ENCODE measurements at regions of chr11 and their contacts with region 1.

Region 1: DNA sequence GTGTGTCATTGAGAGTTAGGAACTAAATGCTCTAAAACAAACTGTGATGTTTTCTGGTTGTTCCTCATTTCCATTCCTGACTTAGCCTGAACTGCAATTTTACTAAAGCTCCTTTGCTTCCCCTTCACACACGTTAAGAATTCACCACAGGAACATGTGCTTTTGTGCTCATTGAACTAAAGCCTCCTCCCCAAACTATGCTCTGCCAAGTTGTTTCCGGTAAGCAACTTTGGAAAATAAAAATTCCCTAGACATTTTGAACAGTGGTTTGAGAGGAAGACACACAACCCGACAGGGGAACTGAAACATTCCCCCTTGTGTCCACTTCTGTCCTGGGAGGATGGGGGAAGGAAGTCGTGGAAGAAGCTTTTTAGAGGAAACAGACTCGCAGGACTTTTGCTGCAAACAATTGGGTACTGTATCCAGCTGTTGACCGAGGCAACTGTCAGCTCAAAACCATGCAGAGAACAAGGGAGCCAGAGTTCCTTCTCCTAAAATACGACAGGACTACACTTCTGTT is 66.9 kb downstream of the GAB2 start:
- DNase-seq: peak; percentile 57 to 68 (median 65)
- H3K4me3 ChIP-seq: peak overlapping the region; percentile 19 to 70 (median 37)
- H3K4me3 Mint-ChIP-seq: peak overlapping the region; percentile 69 to 86
- H3K27ac ChIP-seq: peak overlapping the region; percentile 67 to 92
- H3K27ac Mint-ChIP-seq: peak overlapping the region; percentile 93 to 98 (median 96)
- H3K4me1 ChIP-seq: peaks cover 80 to 84% of the 10 kb centered on the region in 2 donors
- H3K4me1 Mint-ChIP-seq: peaks cover 92% of the 10 kb centered on the region
- H3K27me3 ChIP-seq: no peaks in the 10 kb centered on the region
- H3K27me3 Mint-ChIP-seq: peaks cover 0 to 1% (median 0%) of the 10 kb centered on the region in 3 donors
- CTCF ChIP-seq: no peak

Region 2: DNA sequence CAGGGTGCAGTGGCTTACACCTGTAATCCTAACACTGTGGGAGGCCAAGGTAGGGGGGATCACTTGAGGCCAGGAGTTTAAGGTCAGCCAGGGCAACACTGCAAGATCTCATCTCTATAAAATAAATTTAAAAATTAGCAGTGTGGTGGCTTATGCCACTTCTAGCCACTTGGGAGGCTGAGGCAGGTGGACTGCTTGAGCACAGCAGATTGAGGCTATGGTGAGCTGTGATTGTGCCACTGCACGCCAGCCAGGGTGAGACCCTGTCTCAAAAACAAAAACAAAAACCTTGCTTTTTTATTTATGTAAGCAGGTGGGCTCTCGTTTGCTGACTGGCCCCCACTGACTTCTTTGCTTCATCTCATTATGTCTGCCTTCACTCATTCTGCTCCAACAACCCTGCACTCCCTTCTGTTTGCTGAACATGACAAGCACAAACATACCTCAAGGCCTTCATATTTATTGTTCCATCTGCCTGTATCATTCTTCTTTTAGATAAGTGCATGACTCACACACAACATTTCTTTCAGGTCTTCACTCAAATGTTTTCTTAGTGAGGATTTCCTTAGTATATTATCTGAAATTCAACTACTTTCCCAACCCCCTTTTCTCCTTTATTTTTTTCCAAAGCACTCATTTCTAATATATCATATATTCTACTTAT is 680.7 kb before region 1 on chr11:
- intact Hi-C with region 1: no loop called
- DNase-seq: no peak
- H3K4me3 ChIP-seq: no peak overlapping the region
- H3K4me3 Mint-ChIP-seq: no peak overlapping the region
- H3K27ac ChIP-seq: no peak overlapping the region
- H3K27ac Mint-ChIP-seq: peak overlapping the region in 2 of 7 donors; percentile 13 to 48
- H3K4me1 ChIP-seq: no peaks in the 10 kb centered on the region
- H3K4me1 Mint-ChIP-seq: no peaks in the 10 kb centered on the region
- H3K27me3 ChIP-seq: no peaks in the 10 kb centered on the region
- H3K27me3 Mint-ChIP-seq: peaks cover 0 to 3% (median 0%) of the 10 kb centered on the region in 3 donors
- CTCF ChIP-seq: no peak

Region 3: GRCh38 chr11:78168539-78169477 is 181.9 kb before region 1 on chr11:
- intact Hi-C with region 1: no loop called
- DNase-seq: no peak
- H3K4me3 ChIP-seq: no peak overlapping the region
- H3K4me3 Mint-ChIP-seq: no peak overlapping the region
- H3K27ac ChIP-seq: no peak overlapping the region
- H3K27ac Mint-ChIP-seq: no peak overlapping the region
- H3K4me1 ChIP-seq: no peaks in the 10 kb centered on the region
- H3K4me1 Mint-ChIP-seq: no peaks in the 10 kb centered on the region
- H3K27me3 ChIP-seq: no peaks in the 10 kb centered on the region
- H3K27me3 Mint-ChIP-seq: peaks cover 0 to 3% (median 0%) of the 10 kb centered on the region in 3 donors
- CTCF ChIP-seq: no peak

Region 4: DNA sequence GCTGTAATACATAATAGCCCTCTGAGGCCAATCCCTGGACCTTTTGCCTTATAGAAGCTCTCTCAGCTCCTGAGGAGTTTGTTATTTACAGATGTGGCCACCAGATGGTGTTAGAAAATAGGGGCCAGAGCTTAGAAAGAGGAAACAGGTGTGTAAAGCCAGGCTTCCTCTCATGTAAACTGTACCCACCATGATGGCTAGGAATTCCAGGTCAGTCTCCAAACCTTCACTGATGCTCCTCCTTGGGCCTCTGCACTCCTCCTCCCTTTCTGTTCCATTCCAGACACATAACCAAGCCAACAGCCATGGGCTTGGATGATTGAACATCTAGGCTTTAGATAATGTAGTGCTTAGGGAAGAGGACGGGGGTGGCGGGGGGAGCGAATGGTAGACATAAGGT is 122.2 kb before region 1 on chr11:
- intact Hi-C with region 1: no loop called
- DNase-seq: peak; percentile 48 to 60 (median 56)
- H3K4me3 ChIP-seq: no peak overlapping the region
- H3K4me3 Mint-ChIP-seq: no peak overlapping the region
- H3K27ac ChIP-seq: peak overlapping the region in 1 of 2 donors; percentile 23
- H3K27ac Mint-ChIP-seq: peak overlapping the region in 2 of 7 donors; percentile 55 to 71
- H3K4me1 ChIP-seq: peaks cover 8 to 9% of the 10 kb centered on the region in 2 donors
- H3K4me1 Mint-ChIP-seq: peaks cover 37% of the 10 kb centered on the region
- H3K27me3 ChIP-seq: no peaks in the 10 kb centered on the region
- H3K27me3 Mint-ChIP-seq: no peaks in the 10 kb centered on the region
- CTCF ChIP-seq: peak; percentile 68

Region 5: GRCh38 chr11:78295991-78296935 is 54.4 kb before region 1 on chr11:
- intact Hi-C with region 1: loop called in 1 of 2 experiments (anchors 5 kb)
- DNase-seq: no peak
- H3K4me3 ChIP-seq: no peak overlapping the region
- H3K4me3 Mint-ChIP-seq: no peak overlapping the region
- H3K27ac ChIP-seq: peak overlapping the region in 1 of 2 donors; percentile 42
- H3K27ac Mint-ChIP-seq: peak overlapping the region in 4 of 7 donors; percentile 58 to 76 (median 67)
- H3K4me1 ChIP-seq: peaks cover 26 to 28% of the 10 kb centered on the region in 2 donors
- H3K4me1 Mint-ChIP-seq: peaks cover 54% of the 10 kb centered on the region
- H3K27me3 ChIP-seq: no peaks in the 10 kb centered on the region
- H3K27me3 Mint-ChIP-seq: no peaks in the 10 kb centered on the region
- CTCF ChIP-seq: no peak

Region 6: DNA sequence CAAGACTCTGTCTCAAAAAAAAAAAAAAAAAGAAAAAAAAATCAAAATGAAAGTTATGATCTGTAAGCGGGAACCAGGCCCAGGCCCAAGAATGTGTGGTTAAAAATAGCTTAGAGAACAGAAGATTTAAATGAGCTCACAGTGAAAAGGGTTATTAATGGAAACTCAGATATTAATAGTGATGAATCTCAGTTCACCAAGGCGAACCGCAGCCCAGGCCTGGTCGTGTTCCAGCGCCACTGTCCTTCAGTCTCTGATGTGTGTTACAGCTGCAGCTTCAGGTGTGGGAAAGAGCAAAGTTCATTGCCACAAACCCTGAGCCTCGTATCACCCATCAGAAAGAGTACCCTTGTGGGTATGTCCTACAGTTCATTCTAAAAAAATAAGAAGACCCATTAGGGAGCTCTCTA is 40.2 kb before region 1 on chr11:
- intact Hi-C with region 1: loop called in 1 of 2 experiments (anchors 5 kb)
- DNase-seq: no peak
- H3K4me3 ChIP-seq: no peak overlapping the region
- H3K4me3 Mint-ChIP-seq: no peak overlapping the region
- H3K27ac ChIP-seq: peak overlapping the region in 1 of 2 donors; percentile 55
- H3K27ac Mint-ChIP-seq: peak overlapping the region; percentile 38 to 73 (median 54)
- H3K4me1 ChIP-seq: peaks cover 30 to 63% of the 10 kb centered on the region in 2 donors
- H3K4me1 Mint-ChIP-seq: peaks cover 72% of the 10 kb centered on the region
- H3K27me3 ChIP-seq: no peaks in the 10 kb centered on the region
- H3K27me3 Mint-ChIP-seq: no peaks in the 10 kb centered on the region
- CTCF ChIP-seq: no peak

Region 7: DNA sequence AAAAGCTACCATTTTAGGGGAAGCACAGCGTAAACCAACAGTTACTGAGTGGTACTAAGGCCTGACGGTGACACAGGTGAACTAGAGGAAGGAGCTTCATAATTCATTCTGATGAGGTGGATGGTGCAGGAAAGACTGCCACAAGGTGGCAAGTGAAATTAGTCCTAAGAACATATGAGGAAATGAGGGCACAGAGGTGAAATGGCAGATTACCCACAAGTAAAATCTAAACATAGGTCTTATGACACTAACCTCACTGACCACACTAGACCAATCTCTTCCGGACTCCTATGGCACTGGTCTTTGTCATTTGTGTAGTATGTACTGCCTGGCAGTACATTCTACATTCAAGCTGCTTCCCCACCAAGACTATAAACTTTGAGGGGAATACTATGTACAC is 46.7 kb after region 1 on chr11:
- intact Hi-C with region 1: loop called in 1 of 2 experiments (anchors 5 kb)
- DNase-seq: peak; percentile 48 to 56 (median 53)
- H3K4me3 ChIP-seq: peak overlapping the region in 1 of 3 experiments; percentile 15
- H3K4me3 Mint-ChIP-seq: peak overlapping the region in 1 of 2 donors; percentile 23
- H3K27ac ChIP-seq: peak overlapping the region in 1 of 2 donors; percentile 45
- H3K27ac Mint-ChIP-seq: peak overlapping the region in 6 of 7 donors; percentile 51 to 79 (median 72)
- H3K4me1 ChIP-seq: peaks cover 19 to 29% of the 10 kb centered on the region in 2 donors
- H3K4me1 Mint-ChIP-seq: peaks cover 60% of the 10 kb centered on the region
- H3K27me3 ChIP-seq: no peaks in the 10 kb centered on the region
- H3K27me3 Mint-ChIP-seq: no peaks in the 10 kb centered on the region
- CTCF ChIP-seq: no peak

Region 8: GRCh38 chr11:78698612-78699011 is 347.9 kb after region 1 on chr11:
- intact Hi-C with region 1: no loop called
- DNase-seq: no peak
- H3K4me3 ChIP-seq: no peak overlapping the region
- H3K4me3 Mint-ChIP-seq: no peak overlapping the region
- H3K27ac ChIP-seq: no peak overlapping the region
- H3K27ac Mint-ChIP-seq: no peak overlapping the region
- H3K4me1 ChIP-seq: no peaks in the 10 kb centered on the region
- H3K4me1 Mint-ChIP-seq: no peaks in the 10 kb centered on the region
- H3K27me3 ChIP-seq: no peaks in the 10 kb centered on the region
- H3K27me3 Mint-ChIP-seq: peaks cover 3 to 10% (median 6%) of the 10 kb centered on the region in 3 donors
- CTCF ChIP-seq: no peak

Measured in CD14-positive monocyte (primary cell).